Activated T-helper 1 cell treated with anti-CD3 and anti-CD28 coated beads, Interleukin-12 subunit alpha, Interleukin-12 subunit beta, Interleukin-2, Interleukin-4 antibody, amounts not matched to agents 30 ng/mL and 10 ng/mL and 1 ng/mL, durations not matched to agents 14 hours and 24 hours and 36 hours (primary cell): ENCODE measurements at regions of chr11 and their contacts with region 1.

Region 1: GRCh38 chr11:94504689-94505293 is 7.5 kb upstream of the C11orf97 start:
- DNase-seq: no peak
- H3K4me3 Mint-ChIP-seq: no peak overlapping the region
- H3K27ac Mint-ChIP-seq: no peak overlapping the region
- H3K4me1 Mint-ChIP-seq: no peaks in the 10 kb centered on the region
- H3K27me3 Mint-ChIP-seq: peaks cover 16% of the 10 kb centered on the region

Region 2: DNA sequence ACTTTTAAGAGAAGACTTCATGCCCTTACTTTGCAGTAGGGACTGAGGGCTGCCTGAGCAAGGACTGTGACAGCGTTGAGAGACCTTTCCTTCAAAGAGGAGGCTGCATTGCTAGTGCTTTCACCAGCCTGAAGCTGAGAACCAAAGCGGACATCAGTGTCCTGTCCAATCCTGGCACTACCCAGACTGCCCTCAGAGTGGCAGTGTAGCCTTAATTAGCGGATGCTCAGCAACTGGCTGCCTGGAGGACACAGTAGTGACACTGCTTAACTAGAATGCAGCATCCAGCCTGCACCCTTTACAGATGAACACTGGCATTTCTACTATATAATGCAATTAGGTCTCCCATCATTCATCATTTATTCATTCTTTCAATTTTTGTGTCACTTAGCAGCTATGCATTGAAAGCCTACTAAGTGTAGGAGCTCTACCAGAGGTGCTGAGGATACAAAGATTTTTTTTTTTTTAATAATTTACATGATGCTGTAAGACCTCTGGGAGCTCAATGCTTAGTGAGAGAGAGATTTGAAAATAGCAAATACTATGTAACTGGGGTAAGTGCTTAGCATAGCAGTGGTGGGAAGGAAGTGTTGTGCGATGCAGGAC is 1270.1 kb before region 1 on chr11:
- intact Hi-C with region 1: loop called (anchors 1 kb)
- DNase-seq: peak; percentile 55
- H3K4me3 Mint-ChIP-seq: no peak overlapping the region
- H3K27ac Mint-ChIP-seq: no peak overlapping the region
- H3K4me1 Mint-ChIP-seq: no peaks in the 10 kb centered on the region
- H3K27me3 Mint-ChIP-seq: peaks cover 22% of the 10 kb centered on the region

Region 3: GRCh38 chr11:93895106-93895862 is 609.5 kb before region 1 on chr11:
- intact Hi-C with region 1: loop called (anchors 1 kb)
- DNase-seq: no peak
- H3K4me3 Mint-ChIP-seq: no peak overlapping the region
- H3K27ac Mint-ChIP-seq: no peak overlapping the region
- H3K4me1 Mint-ChIP-seq: no peaks in the 10 kb centered on the region
- H3K27me3 Mint-ChIP-seq: peaks cover 7% of the 10 kb centered on the region

Region 4: DNA sequence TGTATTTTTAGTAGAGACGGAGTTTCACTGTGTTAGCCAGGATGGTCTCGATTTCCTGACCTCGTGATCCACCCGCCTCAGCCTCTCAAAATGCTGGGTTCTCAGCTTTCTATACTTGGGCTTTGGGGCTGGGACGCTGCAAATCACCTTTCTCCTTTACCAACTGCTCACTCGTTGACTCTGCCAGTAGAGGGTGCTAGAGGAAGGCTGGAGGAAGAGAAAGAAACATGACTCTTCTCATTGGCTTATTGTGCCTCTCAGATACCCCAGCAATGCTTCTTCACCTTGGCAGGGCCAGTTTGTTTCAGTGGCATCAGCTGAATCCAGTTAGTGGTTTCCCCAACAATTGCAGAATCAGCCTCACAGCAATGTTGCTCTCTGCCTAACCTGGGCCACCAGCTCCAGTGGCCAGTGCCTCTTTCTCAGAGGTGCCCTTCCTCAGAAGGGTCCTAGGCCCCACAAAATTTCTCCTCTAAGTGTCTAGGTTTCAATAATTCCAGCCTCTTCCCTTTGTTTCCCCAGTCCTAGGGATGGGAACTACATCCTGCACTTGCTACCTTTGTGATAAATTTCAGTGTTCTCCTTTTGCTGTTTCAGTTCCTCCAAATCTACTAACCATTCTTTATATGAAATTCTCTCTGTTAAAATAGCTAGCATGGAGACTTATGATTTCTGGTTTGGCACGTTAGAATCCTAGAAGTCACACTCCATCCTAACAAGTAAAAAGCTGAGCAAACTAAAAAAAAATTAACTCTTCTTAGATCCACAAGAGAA is 582.9 kb before region 1 on chr11:
- intact Hi-C with region 1: loop called (anchors 1 kb)
- DNase-seq: peak; percentile 7
- H3K4me3 Mint-ChIP-seq: no peak overlapping the region
- H3K27ac Mint-ChIP-seq: no peak overlapping the region
- H3K4me1 Mint-ChIP-seq: no peaks in the 10 kb centered on the region
- H3K27me3 Mint-ChIP-seq: peaks cover 2% of the 10 kb centered on the region

Region 5: DNA sequence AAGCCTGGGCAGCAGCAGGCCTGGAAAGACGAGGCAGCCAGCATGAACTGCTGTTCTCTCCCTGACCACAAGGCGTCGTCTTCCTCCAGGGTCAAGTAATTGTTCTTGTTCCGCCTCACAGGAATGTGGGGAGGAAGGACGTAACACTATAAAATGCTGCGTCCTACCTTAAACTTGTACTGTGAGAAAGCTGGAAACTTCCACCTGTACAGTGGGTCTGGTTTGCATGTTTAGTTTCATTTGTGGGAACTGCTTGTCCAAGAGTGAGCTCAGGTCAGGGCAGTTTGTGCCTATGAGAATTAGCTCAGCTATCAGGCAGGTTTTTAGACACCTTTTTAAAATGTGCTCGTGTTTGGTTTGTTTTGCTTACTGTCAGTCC is 320.9 kb before region 1 on chr11:
- intact Hi-C with region 1: loop called (anchors 1 kb)
- DNase-seq: no peak
- H3K4me3 Mint-ChIP-seq: no peak overlapping the region
- H3K27ac Mint-ChIP-seq: no peak overlapping the region
- H3K4me1 Mint-ChIP-seq: no peaks in the 10 kb centered on the region
- H3K27me3 Mint-ChIP-seq: no peaks in the 10 kb centered on the region

Region 6: DNA sequence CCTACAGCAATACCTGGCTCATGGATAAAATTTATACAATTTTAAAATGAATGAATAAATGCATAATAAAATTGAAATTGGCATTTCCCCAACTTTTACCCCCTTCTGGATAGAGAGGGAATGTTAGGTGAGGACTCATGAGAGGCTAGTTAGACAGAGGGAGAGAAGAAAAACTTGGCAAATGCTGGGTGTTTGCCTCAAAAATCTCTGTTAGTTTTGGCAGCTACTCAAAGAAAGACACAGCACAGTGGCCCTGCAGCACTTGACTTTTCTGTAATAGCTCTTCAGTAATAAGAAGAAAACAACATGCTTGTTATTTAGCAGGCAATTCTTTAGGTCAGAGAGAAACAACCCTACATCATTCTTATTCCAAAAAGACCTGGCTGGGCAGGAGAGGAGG is 221.1 kb before region 1 on chr11:
- intact Hi-C with region 1: no loop called
- DNase-seq: no peak
- H3K4me3 Mint-ChIP-seq: no peak overlapping the region
- H3K27ac Mint-ChIP-seq: no peak overlapping the region
- H3K4me1 Mint-ChIP-seq: no peaks in the 10 kb centered on the region
- H3K27me3 Mint-ChIP-seq: no peaks in the 10 kb centered on the region

Region 7: DNA sequence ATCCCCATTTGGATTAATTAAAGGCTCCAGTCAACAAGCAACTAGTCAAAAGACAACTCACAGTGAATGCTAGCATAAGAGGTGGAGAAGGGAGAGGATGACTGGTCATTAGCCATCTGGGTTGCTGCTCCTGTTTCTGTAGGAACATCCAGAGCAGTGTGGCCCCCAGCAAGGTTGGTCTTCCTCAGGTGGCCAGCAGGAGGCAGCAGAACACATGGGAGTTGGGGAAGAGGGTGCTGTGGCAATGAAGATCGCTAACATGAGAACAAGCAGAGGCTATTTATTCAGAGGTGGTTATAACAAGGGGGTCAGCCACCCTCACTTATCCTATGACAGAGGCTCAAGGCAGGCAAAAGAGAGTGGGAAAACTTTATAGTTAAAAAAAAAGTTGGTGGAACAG is 179.1 kb before region 1 on chr11:
- intact Hi-C with region 1: loop called (anchors 1 kb)
- DNase-seq: peak; percentile 44
- H3K4me3 Mint-ChIP-seq: no peak overlapping the region
- H3K27ac Mint-ChIP-seq: no peak overlapping the region
- H3K4me1 Mint-ChIP-seq: no peaks in the 10 kb centered on the region
- H3K27me3 Mint-ChIP-seq: peaks cover 4% of the 10 kb centered on the region